ENCODE measurements at regions of chr12 and their contacts with region 1.

Region 1: DNA sequence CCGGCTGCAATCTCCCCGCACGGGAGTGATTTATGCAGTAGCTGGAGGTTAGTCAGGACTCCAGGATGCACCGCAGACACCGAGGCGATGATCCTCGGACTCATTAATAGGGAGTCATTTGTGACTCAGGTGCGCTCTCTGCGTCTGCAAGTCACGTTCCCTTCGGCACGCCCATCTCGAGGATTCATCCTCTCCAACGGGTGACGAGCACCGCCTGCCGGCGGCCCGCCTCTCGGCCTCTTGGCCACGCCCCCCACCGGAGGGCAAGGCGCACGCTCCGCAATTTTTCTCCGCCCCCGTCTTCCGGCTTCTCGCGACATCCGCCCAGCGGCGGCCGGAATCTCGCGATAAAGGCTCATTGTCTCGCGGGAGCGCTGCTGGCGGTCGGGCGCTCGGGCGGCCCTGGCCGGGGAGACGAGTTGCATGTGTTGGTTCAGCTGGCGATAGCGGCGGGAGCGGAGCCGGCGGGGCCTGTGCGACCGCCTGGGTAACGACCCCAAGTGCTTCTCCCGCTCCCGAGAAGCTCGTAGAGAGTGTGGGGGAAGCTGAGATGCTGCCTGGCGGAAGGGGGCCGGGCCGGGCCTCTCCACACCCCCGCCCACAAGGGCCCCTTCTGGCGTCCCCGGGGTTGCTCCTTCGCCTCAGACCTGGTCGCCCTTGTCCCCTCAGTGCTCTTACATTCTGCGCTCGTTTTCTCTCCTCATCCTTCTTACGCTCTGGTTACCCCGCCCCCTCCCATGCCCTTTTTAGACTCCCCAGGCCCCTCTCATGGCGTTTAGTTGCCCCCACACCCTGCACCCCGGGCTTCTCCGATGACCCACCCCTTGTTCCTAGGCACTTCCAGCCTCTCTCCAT is at the start of gene DENR:
- DNase-seq: peak; percentile 98 to 100 (median 99)
- ATAC-seq: peak; percentile 99
- H3K4me3 ChIP-seq: peak within 1 kb of the TSS; percentile 87
- H3K4me3 Mint-ChIP-seq: peak within 1 kb of the TSS; percentile 93 to 100 (median 96)
- H3K27ac ChIP-seq: peak within 1 kb of the TSS; percentile 94
- H3K27ac Mint-ChIP-seq: peak within 1 kb of the TSS; percentile 89 to 98 (median 96)
- H3K4me1 ChIP-seq: peaks cover 12 to 19% of the 10 kb centered on the region in 2 donors
- H3K4me1 Mint-ChIP-seq: peaks cover 31 to 70% (median 60%) of the 10 kb centered on the region in 7 donors
- H3K27me3 ChIP-seq: no peaks in the 10 kb centered on the region
- H3K27me3 Mint-ChIP-seq: no peaks in the 10 kb centered on the region
- total RNA-seq, gene DENR: 29.5 to 65.5 (median 46.1) TPM

Region 2: GRCh38 chr12:122336015-122336946 is 416.4 kb before region 1 on chr12:
- CTCF ChIA-PET with region 1: no interaction called
- POLR2A ChIA-PET with region 1: interaction called, 3 read pairs
- intact Hi-C with region 1: loop called in 1 of 2 experiments (anchors 10 kb)
- DNase-seq: peak in 8 of 9 donors; percentile 16 to 43 (median 33)
- ATAC-seq: peak; percentile 57
- H3K4me3 ChIP-seq: no peak overlapping the region
- H3K4me3 Mint-ChIP-seq: peak overlapping the region in 2 of 10 donors; percentile 21 to 32
- H3K27ac ChIP-seq: no peak overlapping the region
- H3K27ac Mint-ChIP-seq: peak overlapping the region in 7 of 9 donors; percentile 38 to 82 (median 71)
- H3K4me1 ChIP-seq: no peaks in the 10 kb centered on the region
- H3K4me1 Mint-ChIP-seq: peaks cover 5 to 18% (median 12%) of the 10 kb centered on the region in 7 donors
- H3K27me3 ChIP-seq: no peaks in the 10 kb centered on the region
- H3K27me3 Mint-ChIP-seq: no peaks in the 10 kb centered on the region

Region 3: GRCh38 chr12:122500685-122501488 is 251.8 kb before region 1 on chr12 and contains the start of gene ZCCHC8:
- CTCF ChIA-PET with region 1: no interaction called
- POLR2A ChIA-PET with region 1: interaction called, 12 read pairs
- intact Hi-C with region 1: loop called (anchors 1 kb)
- DNase-seq: peak; percentile 83 to 97 (median 94)
- ATAC-seq: peak; percentile 96
- H3K4me3 ChIP-seq: peak within 1 kb of the TSS; percentile 97
- H3K4me3 Mint-ChIP-seq: peak within 1 kb of the TSS; percentile 83 to 99 (median 96)
- H3K27ac ChIP-seq: peak within 1 kb of the TSS; percentile 92
- H3K27ac Mint-ChIP-seq: peak within 1 kb of the TSS; percentile 89 to 98 (median 96)
- H3K4me1 ChIP-seq: peaks cover 9 to 15% of the 10 kb centered on the region in 2 donors
- H3K4me1 Mint-ChIP-seq: peaks cover 22 to 47% (median 39%) of the 10 kb centered on the region in 7 donors
- H3K27me3 ChIP-seq: no peaks in the 10 kb centered on the region
- H3K27me3 Mint-ChIP-seq: no peaks in the 10 kb centered on the region
- total RNA-seq, gene ZCCHC8: 44.4 to 54.0 (median 46.8) TPM

Region 4: DNA sequence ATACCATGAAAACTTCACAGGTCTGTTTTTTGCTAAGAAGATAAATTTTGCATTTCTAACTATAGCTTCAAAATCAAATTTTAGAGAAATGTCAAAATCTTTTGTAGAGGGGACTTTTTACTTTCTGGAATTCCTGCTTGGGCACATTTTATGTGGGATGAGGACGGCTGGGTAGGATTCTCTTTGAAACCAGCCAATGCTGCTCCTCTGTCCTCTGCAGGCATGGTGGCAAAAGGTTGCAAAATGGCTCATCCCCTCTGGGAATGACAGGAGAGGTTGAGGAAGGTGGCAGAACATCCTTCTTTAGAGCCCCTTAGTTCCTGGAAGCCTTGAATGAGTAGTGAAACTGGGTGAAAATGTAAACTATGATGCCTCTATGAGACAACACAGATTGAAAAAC is 15.0 kb after region 1 on chr12:
- CTCF ChIA-PET with region 1: no interaction called
- POLR2A ChIA-PET with region 1: interaction called, 17 read pairs
- intact Hi-C with region 1: no loop called
- DNase-seq: no peak
- ATAC-seq: no peak
- H3K4me3 ChIP-seq: no peak overlapping the region
- H3K4me3 Mint-ChIP-seq: no peak overlapping the region
- H3K27ac ChIP-seq: no peak overlapping the region
- H3K27ac Mint-ChIP-seq: peak overlapping the region in 1 of 9 donors; percentile 51
- H3K4me1 ChIP-seq: no peaks in the 10 kb centered on the region
- H3K4me1 Mint-ChIP-seq: peaks cover 0 to 15% (median under 1%) of the 10 kb centered on the region in 7 donors
- H3K27me3 ChIP-seq: no peaks in the 10 kb centered on the region
- H3K27me3 Mint-ChIP-seq: no peaks in the 10 kb centered on the region

Region 5: GRCh38 chr12:122951979-122952892 is 199.5 kb after region 1 on chr12:
- CTCF ChIA-PET with region 1: no interaction called
- POLR2A ChIA-PET with region 1: no interaction called
- intact Hi-C with region 1: loop called in 1 of 2 experiments (anchors 1 kb)
- DNase-seq: peak; percentile 53 to 73 (median 68)
- ATAC-seq: peak; percentile 94
- H3K4me3 ChIP-seq: no peak overlapping the region
- H3K4me3 Mint-ChIP-seq: no peak overlapping the region
- H3K27ac ChIP-seq: no peak overlapping the region
- H3K27ac Mint-ChIP-seq: peak overlapping the region in 4 of 9 donors; percentile 22 to 51 (median 35)
- H3K4me1 ChIP-seq: peaks cover 0 to under 1% of the 10 kb centered on the region in 2 donors
- H3K4me1 Mint-ChIP-seq: peaks cover 0 to 15% (median 5%) of the 10 kb centered on the region in 7 donors
- H3K27me3 ChIP-seq: no peaks in the 10 kb centered on the region
- H3K27me3 Mint-ChIP-seq: no peaks in the 10 kb centered on the region